HepG2 (cell line): ENCODE measurements at regions of chr3 and their contacts with region 1.

Region 1: GRCh38 chr3:124559881-124560574 is 170.2 kb upstream of the UMPS start:
- DNase-seq: peak; percentile 60
- ATAC-seq: peak; percentile 85
- H3K4me3 ChIP-seq: no peak overlapping the region
- H3K27ac ChIP-seq: no peak overlapping the region
- H3K4me1 ChIP-seq: peaks cover 6% of the 10 kb centered on the region
- H3K27me3 ChIP-seq: peaks cover 0 to 41% of the 10 kb centered on the region in 2 experiments; a peak in 3 of 5 replicates
- CTCF ChIP-seq: peak; percentile 92
- EP300 ChIP-seq: no peak
- POLR2A ChIP-seq: no peak
- RAD21 ChIP-seq: peak; percentile 83

Region 2: GRCh38 chr3:124351430-124352148 is 208.4 kb before region 1 on chr3:
- CTCF ChIA-PET with region 1: no interaction called
- POLR2A ChIA-PET with region 1: no interaction called
- in situ Hi-C with region 1: loop called (anchors 5 kb)
- intact Hi-C with region 1: loop called (anchors 2 kb)
- DNase-seq: peak; percentile 39
- ATAC-seq: peak; percentile 80
- H3K4me3 ChIP-seq: no peak overlapping the region
- H3K27ac ChIP-seq: no peak overlapping the region
- H3K4me1 ChIP-seq: no peaks in the 10 kb centered on the region
- H3K27me3 ChIP-seq: no peaks in the 10 kb centered on the region
- CTCF ChIP-seq: peak; percentile 61
- EP300 ChIP-seq: no peak
- POLR2A ChIP-seq: no peak
- RAD21 ChIP-seq: no peak

Region 3: DNA sequence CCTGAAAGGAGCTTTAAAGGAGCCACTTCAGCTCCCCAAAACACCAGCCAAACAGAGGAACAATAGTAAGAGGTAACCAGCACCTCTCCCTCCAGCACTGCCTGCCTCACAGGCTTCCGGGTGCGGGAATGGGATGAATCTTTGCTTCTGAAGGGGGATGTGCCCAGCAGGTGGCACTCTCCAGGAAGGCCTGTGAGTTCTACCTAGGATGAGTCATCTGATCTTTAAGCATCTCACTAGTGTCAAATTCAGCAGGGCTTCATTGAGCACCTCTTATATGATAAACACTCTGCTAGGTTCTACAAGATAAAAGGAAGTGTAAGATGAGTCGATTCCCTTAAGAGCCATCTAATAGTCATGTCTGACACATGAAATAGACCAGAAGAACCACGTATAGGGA is 67.2 kb before region 1 on chr3:
- CTCF ChIA-PET with region 1: interaction called, 27 read pairs
- POLR2A ChIA-PET with region 1: no interaction called
- in situ Hi-C with region 1: no loop called
- intact Hi-C with region 1: no loop called
- DNase-seq: peak; percentile 73
- ATAC-seq: peak; percentile 98
- H3K4me3 ChIP-seq: no peak overlapping the region
- H3K27ac ChIP-seq: no peak overlapping the region
- H3K4me1 ChIP-seq: no peaks in the 10 kb centered on the region
- H3K27me3 ChIP-seq: peaks cover 1 to 23% of the 10 kb centered on the region in 2 experiments; a peak in 3 of 5 replicates
- CTCF ChIP-seq: peak; percentile 84
- EP300 ChIP-seq: no peak
- POLR2A ChIP-seq: no peak
- RAD21 ChIP-seq: peak; percentile 60; the same call in 1 of the 2 replicates

Region 4: GRCh38 chr3:124607160-124607559 is 47.1 kb after region 1 on chr3:
- CTCF ChIA-PET with region 1: no interaction called
- POLR2A ChIA-PET with region 1: no interaction called
- in situ Hi-C with region 1: no loop called
- intact Hi-C with region 1: no loop called
- DNase-seq: peak; percentile 58
- ATAC-seq: peak; percentile 82
- H3K4me3 ChIP-seq: no peak overlapping the region
- H3K27ac ChIP-seq: no peak overlapping the region
- H3K4me1 ChIP-seq: peaks cover 74% of the 10 kb centered on the region
- H3K27me3 ChIP-seq: no peaks in the 10 kb centered on the region; a peak in 1 of 5 replicates
- CTCF ChIP-seq: no peak
- EP300 ChIP-seq: peak in 1 of 2 experiments; percentile 29; a peak in 1 of 4 replicates
- POLR2A ChIP-seq: no peak
- RAD21 ChIP-seq: no peak

Region 5: GRCh38 chr3:124627501-124627908 is 67.5 kb after region 1 on chr3:
- CTCF ChIA-PET with region 1: no interaction called
- POLR2A ChIA-PET with region 1: no interaction called
- in situ Hi-C with region 1: no loop called
- intact Hi-C with region 1: no loop called
- DNase-seq: no peak
- ATAC-seq: no peak
- H3K4me3 ChIP-seq: no peak overlapping the region
- H3K27ac ChIP-seq: no peak overlapping the region
- H3K4me1 ChIP-seq: peaks cover 42% of the 10 kb centered on the region
- H3K27me3 ChIP-seq: no peaks in the 10 kb centered on the region
- CTCF ChIP-seq: no peak
- EP300 ChIP-seq: no peak
- POLR2A ChIP-seq: no peak
- RAD21 ChIP-seq: no peak

Region 6: GRCh38 chr3:124741027-124741426 is 181.0 kb after region 1 on chr3:
- CTCF ChIA-PET with region 1: no interaction called
- POLR2A ChIA-PET with region 1: no interaction called
- in situ Hi-C with region 1: no loop called
- intact Hi-C with region 1: loop called (anchors 10 kb)
- DNase-seq: no peak
- ATAC-seq: no peak
- H3K4me3 ChIP-seq: no peak overlapping the region
- H3K27ac ChIP-seq: no peak overlapping the region
- H3K4me1 ChIP-seq: peaks cover 12% of the 10 kb centered on the region
- H3K27me3 ChIP-seq: no peaks in the 10 kb centered on the region
- CTCF ChIP-seq: no peak
- EP300 ChIP-seq: no peak
- POLR2A ChIP-seq: no peak
- RAD21 ChIP-seq: no peak